ENCODE measurements at regions of chr1 and their contacts with region 1.

Region 1: GRCh38 chr1:23979878-23980724 is at the start of gene SRSF10:
- DNase-seq: peak; percentile 98
- H3K4me3 Mint-ChIP-seq: peak within 1 kb of the TSS; percentile 91
- H3K27ac Mint-ChIP-seq: peak within 1 kb of the TSS; percentile 95
- H3K4me1 Mint-ChIP-seq: peaks cover 38% of the 10 kb centered on the region
- H3K27me3 Mint-ChIP-seq: no peaks in the 10 kb centered on the region
- CTCF ChIP-seq: no peak
- total RNA-seq, gene SRSF10: 121 and 134 TPM in 2 replicates

Region 2: GRCh38 chr1:23727362-23727827 is 252.7 kb before region 1 on chr1:
- CTCF ChIA-PET with region 1: no interaction called
- POLR2A ChIA-PET with region 1: no interaction called
- intact Hi-C with region 1: no loop called
- DNase-seq: peak; percentile 83
- H3K4me3 Mint-ChIP-seq: no peak overlapping the region
- H3K27ac Mint-ChIP-seq: peak overlapping the region; percentile 19
- H3K4me1 Mint-ChIP-seq: peaks cover 27% of the 10 kb centered on the region
- H3K27me3 Mint-ChIP-seq: no peaks in the 10 kb centered on the region
- CTCF ChIP-seq: no peak

Region 3: DNA sequence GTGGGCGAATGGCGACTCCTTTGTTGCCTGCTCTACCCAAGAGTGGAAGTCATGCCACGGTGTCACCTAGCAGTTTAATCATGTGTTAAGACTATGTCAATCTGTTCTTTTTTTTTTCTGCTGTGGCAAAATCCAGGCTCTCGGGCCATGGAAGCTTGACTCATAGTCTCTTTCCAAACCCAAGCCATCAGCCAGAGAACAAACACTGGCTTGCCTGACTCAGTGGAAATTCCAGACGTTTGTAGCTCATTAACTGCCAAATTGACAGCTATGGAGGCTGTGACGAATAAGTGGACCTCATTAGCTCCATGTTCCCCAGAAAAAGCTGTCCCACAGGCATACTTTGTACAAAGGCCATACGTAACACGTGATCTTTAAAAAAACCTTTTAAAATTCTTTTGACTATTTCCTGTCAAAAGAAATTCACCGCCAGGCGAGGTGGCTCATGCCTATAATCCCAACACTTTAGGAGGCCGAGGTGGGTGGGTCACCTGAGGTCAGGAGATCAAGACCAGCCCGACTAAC is 28.5 kb before region 1 on chr1:
- CTCF ChIA-PET with region 1: no interaction called
- POLR2A ChIA-PET with region 1: interaction called, 48 read pairs
- intact Hi-C with region 1: no loop called
- DNase-seq: peak; percentile 95
- H3K4me3 Mint-ChIP-seq: peak overlapping the region; percentile 23
- H3K27ac Mint-ChIP-seq: peak overlapping the region; percentile 90
- H3K4me1 Mint-ChIP-seq: peaks cover 37% of the 10 kb centered on the region
- H3K27me3 Mint-ChIP-seq: no peaks in the 10 kb centered on the region
- CTCF ChIP-seq: no peak

Region 4: DNA sequence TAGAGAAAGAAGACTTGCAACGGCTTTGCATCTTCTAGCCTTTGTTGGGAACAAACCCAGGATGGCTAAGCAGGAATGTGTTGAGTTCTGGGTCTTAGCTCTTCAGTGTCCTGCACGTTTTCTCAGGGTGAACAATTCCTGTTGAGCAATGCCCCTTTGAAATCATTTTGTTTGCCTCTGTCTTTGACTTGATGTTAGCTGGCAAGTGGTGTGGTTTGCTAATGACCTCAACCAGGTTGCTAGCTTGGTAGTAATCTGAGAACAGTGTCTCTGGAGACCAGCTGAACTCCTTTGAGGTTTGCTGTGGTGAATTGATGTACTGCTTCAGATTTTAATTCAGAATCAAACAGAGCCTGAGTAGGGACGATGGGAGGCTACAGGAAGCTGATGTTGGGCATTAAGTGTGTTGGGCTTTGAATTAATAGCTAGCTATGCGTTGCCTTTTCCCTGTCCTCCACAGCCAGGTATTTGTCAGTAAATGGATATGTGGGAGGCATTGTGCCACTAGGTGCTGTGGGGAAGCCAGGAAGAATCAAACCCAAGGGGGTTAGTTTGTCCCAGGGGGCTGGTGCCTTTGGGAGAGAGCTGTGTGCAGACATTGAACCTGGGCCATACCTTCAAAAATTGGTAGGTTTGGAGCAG is 23.4 kb after region 1 on chr1:
- CTCF ChIA-PET with region 1: interaction called, 3 read pairs
- POLR2A ChIA-PET with region 1: interaction called, 16 read pairs
- intact Hi-C with region 1: no loop called
- DNase-seq: peak; percentile 85
- H3K4me3 Mint-ChIP-seq: no peak overlapping the region
- H3K27ac Mint-ChIP-seq: peak overlapping the region; percentile 70
- H3K4me1 Mint-ChIP-seq: peaks cover 14% of the 10 kb centered on the region
- H3K27me3 Mint-ChIP-seq: no peaks in the 10 kb centered on the region
- CTCF ChIP-seq: no peak

Region 5: DNA sequence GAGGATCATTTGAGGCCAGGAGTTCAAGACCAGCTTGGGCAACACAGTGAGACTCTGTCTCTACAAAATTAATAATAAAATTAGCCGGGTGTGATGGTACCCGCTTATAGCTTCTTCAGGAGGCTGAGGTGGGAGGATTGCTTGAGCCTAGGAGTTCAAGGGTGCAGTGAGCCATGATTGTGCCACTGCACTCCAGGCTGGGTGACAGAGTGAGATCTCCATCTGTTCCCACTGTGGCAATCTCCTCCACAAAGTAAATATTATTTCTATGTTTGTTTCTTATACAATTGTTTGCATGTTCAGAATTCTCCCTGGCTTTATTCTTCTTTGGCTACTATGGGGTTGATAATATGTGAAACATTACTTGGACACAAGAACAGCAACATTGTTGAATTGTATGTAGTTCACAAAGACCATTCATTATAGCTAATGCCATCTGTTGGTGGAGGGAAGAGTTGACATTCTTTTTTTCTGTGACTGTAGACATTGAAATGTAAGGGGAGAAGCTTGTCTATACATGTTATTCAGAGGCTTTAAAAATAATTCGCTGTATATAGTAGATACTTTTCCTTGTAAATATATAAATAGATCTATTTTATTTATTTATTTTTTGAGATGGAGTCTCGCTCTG is 47.9 kb after region 1 on chr1:
- CTCF ChIA-PET with region 1: interaction called, 8 read pairs
- POLR2A ChIA-PET with region 1: interaction called, 79 read pairs
- intact Hi-C with region 1: loop called (anchors 1 kb)
- DNase-seq: peak; percentile 57
- H3K4me3 Mint-ChIP-seq: no peak overlapping the region
- H3K27ac Mint-ChIP-seq: peak overlapping the region; percentile 40
- H3K4me1 Mint-ChIP-seq: peaks cover 6% of the 10 kb centered on the region
- H3K27me3 Mint-ChIP-seq: no peaks in the 10 kb centered on the region
- CTCF ChIP-seq: peak; percentile 49

Region 6: GRCh38 chr1:24111996-24112779 is 132.1 kb after region 1 on chr1 and contains the start of gene MYOM3:
- CTCF ChIA-PET with region 1: no interaction called
- POLR2A ChIA-PET with region 1: interaction called, 5 read pairs
- intact Hi-C with region 1: loop called (anchors 1 kb)
- DNase-seq: peak; percentile 66
- H3K4me3 Mint-ChIP-seq: no peak within 1 kb of the TSS
- H3K27ac Mint-ChIP-seq: no peak within 1 kb of the TSS
- H3K4me1 Mint-ChIP-seq: peaks cover 21% of the 10 kb centered on the region
- H3K27me3 Mint-ChIP-seq: no peaks in the 10 kb centered on the region
- CTCF ChIP-seq: peak; percentile 65
- total RNA-seq, gene MYOM3: 0.05 and 0.12 TPM in 2 replicates

Region 7: DNA sequence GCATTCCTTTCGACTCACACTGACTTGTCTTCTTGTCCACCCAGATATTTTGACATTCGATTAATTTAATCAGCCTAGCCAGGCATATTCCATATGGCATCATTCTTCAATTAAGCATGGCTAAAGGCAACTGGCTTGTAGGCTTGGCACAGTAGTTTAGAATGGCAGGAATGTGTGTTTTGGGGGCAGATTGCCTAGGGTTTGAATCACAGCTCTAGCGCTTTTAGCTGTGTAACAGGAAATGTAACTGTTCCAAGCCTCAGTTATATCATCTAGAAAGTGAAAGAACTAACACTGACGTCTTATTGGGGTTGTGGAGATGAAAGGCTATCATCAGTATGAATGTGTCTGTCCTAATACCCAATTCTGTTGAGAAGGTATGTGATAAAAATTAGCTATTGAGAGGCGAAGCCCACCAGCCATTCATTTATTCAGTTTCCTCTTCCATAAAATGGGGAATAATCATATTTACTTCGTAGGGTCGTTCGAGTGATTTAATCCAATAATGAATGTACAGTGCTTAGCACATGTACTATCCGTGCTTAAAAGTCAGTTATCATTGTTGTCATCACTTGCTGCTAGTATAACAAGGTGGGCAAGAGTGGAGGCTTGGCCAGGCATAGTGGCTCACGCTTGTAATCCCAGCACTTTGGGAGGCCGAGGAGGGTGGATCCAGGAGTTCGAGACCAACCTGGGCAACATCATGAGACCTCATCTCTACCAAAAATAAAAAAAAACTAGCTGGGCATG is 297.5 kb after region 1 on chr1:
- CTCF ChIA-PET with region 1: no interaction called
- POLR2A ChIA-PET with region 1: no interaction called
- intact Hi-C with region 1: no loop called
- DNase-seq: no peak
- H3K4me3 Mint-ChIP-seq: no peak overlapping the region
- H3K27ac Mint-ChIP-seq: no peak overlapping the region
- H3K4me1 Mint-ChIP-seq: peaks cover 15% of the 10 kb centered on the region
- H3K27me3 Mint-ChIP-seq: no peaks in the 10 kb centered on the region
- CTCF ChIP-seq: no peak

Measured in MCF 10A (cell line).